Aorta (tissue), 5 donors: ENCODE measurements at regions of chr2 and their contacts with region 1.

Region 1: GRCh38 chr2:44361330-44362206 is at the starts of genes CAMKMT and PREPL:
- DNase-seq: peak; percentile 99
- ATAC-seq: peak; percentile 99
- H3K4me3 ChIP-seq: peak within 1 kb of the TSS; percentile 82 to 90
- H3K27ac ChIP-seq: peak within 1 kb of the TSS; percentile 85 to 87
- H3K4me1 ChIP-seq: peaks cover 0 to 2% of the 10 kb centered on the region in 2 donors
- H3K27me3 ChIP-seq: no peaks in the 10 kb centered on the region
- total RNA-seq, gene CAMKMT: 14.1 to 15.2 TPM
- total RNA-seq, gene PREPL: 49.8 to 60.3 TPM

Region 2: DNA sequence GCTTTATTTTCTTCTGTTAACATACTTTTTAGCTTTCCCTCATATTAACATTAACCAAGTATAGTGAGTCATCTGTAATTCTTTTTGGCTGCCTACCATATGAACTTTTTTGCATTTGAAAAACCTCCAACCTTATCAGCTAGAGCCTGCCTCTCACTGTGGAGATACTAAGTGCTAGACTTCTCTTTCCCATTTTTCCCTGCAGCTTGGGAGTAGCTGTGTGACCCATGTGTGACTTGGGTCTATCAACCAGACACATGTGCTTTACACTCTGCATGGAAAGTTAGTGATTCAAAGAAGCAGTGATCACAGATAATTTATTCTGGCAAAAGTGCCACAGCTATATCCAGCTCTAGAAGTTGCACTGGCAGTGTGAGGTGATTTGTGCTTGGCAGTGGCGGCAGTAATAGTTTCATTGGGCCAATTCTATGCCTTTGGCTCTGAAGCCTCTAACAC is 36.6 kb before region 1 on chr2:
- intact Hi-C with region 1: loop called in 1 of 2 experiments (anchors 5 kb)
- DNase-seq: no peak
- ATAC-seq: peak; percentile 58
- H3K4me3 ChIP-seq: no peak overlapping the region
- H3K27ac ChIP-seq: no peak overlapping the region
- H3K4me1 ChIP-seq: peaks cover 0 to 4% of the 10 kb centered on the region in 2 donors
- H3K27me3 ChIP-seq: no peaks in the 10 kb centered on the region

Region 3: GRCh38 chr2:44433881-44434280 is 72.3 kb after region 1 on chr2:
- intact Hi-C with region 1: no loop called
- DNase-seq: no peak
- ATAC-seq: no peak
- H3K4me3 ChIP-seq: no peak overlapping the region
- H3K27ac ChIP-seq: no peak overlapping the region
- H3K4me1 ChIP-seq: peaks cover 6 to 7% of the 10 kb centered on the region in 2 donors
- H3K27me3 ChIP-seq: no peaks in the 10 kb centered on the region

Region 4: DNA sequence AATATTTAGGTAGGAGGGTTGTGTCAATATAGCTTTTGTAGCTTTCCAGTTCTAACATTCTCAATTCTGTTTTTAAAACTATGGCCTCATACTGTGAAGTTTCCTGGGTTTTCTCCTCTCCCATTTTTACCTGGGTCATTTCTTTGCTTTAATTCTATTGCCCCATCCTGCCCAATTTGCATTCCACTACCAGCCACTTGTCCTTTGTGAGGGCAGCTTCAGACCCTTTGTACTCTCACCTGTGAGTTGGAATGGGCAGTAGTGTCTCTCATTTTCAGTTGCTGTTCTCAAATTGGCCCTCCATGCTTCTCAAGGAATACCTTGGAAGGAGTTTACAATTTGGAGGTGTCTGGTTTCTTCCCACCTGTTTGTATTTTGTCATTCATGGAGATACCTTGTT is 108.6 kb after region 1 on chr2:
- intact Hi-C with region 1: no loop called
- DNase-seq: no peak
- ATAC-seq: no peak
- H3K4me3 ChIP-seq: no peak overlapping the region
- H3K27ac ChIP-seq: no peak overlapping the region
- H3K4me1 ChIP-seq: no peaks in the 10 kb centered on the region
- H3K27me3 ChIP-seq: no peaks in the 10 kb centered on the region

Region 5: DNA sequence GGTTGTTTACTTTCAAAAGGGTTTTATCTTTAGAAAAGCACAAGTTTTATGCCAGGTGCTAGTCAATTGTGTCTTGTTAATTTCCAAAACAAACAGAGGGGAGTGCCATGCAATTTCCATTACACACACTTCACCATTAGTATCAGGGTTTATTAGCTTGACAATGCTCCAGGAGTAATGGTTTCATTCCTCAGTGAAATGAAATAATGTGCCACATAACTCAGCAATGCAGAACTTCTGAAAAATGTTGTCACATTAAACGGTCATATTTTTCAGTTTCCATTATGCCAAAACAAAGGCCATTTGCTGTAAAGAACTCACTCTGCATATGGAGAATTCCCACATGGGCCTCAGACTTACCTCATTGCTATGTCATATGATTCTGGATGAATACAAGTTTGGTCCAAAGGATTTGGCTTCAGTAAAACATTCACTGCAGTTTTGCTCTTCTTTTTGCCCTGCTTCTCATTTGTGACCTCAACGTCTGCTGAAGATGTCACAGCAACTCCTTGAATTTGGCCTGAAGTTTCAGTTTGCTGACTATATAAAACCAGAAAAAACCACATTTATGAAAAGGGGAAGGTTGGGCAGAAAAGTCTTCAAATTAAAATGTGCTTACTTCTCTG is 1051.3 kb after region 1 on chr2:
- intact Hi-C with region 1: no loop called
- DNase-seq: no peak
- ATAC-seq: no peak
- H3K4me3 ChIP-seq: no peak overlapping the region
- H3K27ac ChIP-seq: peak overlapping the region in 1 of 2 donors; percentile 40
- H3K4me1 ChIP-seq: no peaks in the 10 kb centered on the region
- H3K27me3 ChIP-seq: no peaks in the 10 kb centered on the region